ENCODE measurements at regions of chr2 and their contacts with region 1.

Region 1: GRCh38 chr2:95121407-95122196 is at the start of gene MRPS5:
- DNase-seq: peak; percentile 93
- ATAC-seq: peak; percentile 89
- H3K4me3 Mint-ChIP-seq: peak within 1 kb of the TSS; percentile 97
- H3K27ac Mint-ChIP-seq: peak within 1 kb of the TSS; percentile 94
- H3K4me1 Mint-ChIP-seq: peaks cover 37% of the 10 kb centered on the region
- H3K27me3 Mint-ChIP-seq: no peaks in the 10 kb centered on the region
- total RNA-seq, gene MRPS5: 90.7 to 97.1 TPM

Region 2: GRCh38 chr2:95099910-95100309 is 21.7 kb before region 1 on chr2:
- CTCF ChIA-PET with region 1: no interaction called
- POLR2A ChIA-PET with region 1: interaction called, 14 read pairs
- intact Hi-C with region 1: no loop called
- DNase-seq: no peak
- ATAC-seq: no peak
- H3K4me3 Mint-ChIP-seq: no peak overlapping the region
- H3K27ac Mint-ChIP-seq: no peak overlapping the region
- H3K4me1 Mint-ChIP-seq: peaks cover 21% of the 10 kb centered on the region
- H3K27me3 Mint-ChIP-seq: no peaks in the 10 kb centered on the region

Region 3: GRCh38 chr2:95159690-95160449 is 38.3 kb after region 1 on chr2 and contains the start of gene ZNF514:
- CTCF ChIA-PET with region 1: interaction called, 6 read pairs
- POLR2A ChIA-PET with region 1: interaction called, 4 read pairs
- intact Hi-C with region 1: loop called (anchors 1 kb)
- DNase-seq: peak; percentile 85
- ATAC-seq: peak; percentile 95
- H3K4me3 Mint-ChIP-seq: peak within 1 kb of the TSS; percentile 81
- H3K27ac Mint-ChIP-seq: peak within 1 kb of the TSS; percentile 80
- H3K4me1 Mint-ChIP-seq: peaks cover 15% of the 10 kb centered on the region
- H3K27me3 Mint-ChIP-seq: no peaks in the 10 kb centered on the region
- total RNA-seq, gene ZNF514: 7.0 to 8.8 TPM

Region 4: GRCh38 chr2:95165129-95166064 is 43.8 kb after region 1 on chr2 and contains the start of gene ZNF2:
- CTCF ChIA-PET with region 1: interaction called, 3 read pairs
- POLR2A ChIA-PET with region 1: no interaction called
- intact Hi-C with region 1: loop called (anchors 1 kb)
- DNase-seq: peak; percentile 98
- ATAC-seq: peak; percentile 98
- H3K4me3 Mint-ChIP-seq: peak within 1 kb of the TSS; percentile 96
- H3K27ac Mint-ChIP-seq: peak within 1 kb of the TSS; percentile 94
- H3K4me1 Mint-ChIP-seq: peaks cover 24% of the 10 kb centered on the region
- H3K27me3 Mint-ChIP-seq: no peaks in the 10 kb centered on the region
- total RNA-seq, gene ZNF2: 4.3 to 5.1 TPM

Region 5: DNA sequence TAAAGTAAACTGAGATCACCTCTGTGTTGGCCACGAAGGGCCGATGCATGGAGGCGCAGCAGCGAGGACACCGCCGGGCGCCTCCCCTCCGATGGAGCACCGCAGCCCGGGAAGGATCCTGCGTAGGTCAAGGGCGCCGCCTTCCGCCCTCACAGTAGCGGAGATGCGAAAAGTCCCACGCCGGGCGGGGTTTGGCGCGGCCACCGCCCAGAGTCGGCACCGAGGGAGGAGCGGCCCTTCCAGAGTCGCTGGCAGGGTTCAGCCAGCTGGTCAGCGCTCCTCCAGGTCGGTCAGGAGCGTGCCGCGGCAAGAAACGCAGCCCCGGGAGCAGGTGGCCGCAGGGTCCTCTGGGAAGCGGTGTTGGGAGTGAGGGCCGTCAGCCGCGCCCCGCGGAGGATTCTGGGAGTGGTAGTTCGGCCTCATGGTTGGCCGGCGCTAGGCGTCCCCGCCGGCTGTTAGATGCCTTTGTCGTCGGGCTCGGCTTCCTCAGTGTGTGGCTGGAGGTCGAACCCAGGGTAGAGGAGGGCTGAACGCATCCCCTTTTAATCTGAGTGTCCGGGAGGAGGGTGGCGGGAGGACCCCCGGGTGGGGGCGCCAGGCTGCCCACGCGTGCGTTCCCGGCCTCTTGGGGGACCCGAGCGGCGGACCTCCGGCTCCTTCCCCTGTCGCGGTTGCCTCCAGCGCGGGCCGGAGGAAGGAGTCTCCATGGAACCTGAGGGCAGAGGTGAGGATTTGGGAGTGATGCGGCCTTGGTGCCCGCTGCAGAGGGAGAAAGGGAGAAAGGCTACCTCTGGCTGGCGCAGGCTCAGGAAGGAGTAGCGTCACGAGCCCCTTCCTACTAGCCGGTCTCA is 85.7 kb after region 1 on chr2 and contains the start of gene ZNF892:
- CTCF ChIA-PET with region 1: no interaction called
- POLR2A ChIA-PET with region 1: no interaction called
- intact Hi-C with region 1: loop called in 1 of 2 experiments (anchors 1 kb)
- DNase-seq: peak; percentile 91
- ATAC-seq: peak; percentile 98
- H3K4me3 Mint-ChIP-seq: peak within 1 kb of the TSS; percentile 87
- H3K27ac Mint-ChIP-seq: peak within 1 kb of the TSS; percentile 68
- H3K4me1 Mint-ChIP-seq: peaks cover 17% of the 10 kb centered on the region
- H3K27me3 Mint-ChIP-seq: no peaks in the 10 kb centered on the region
- total RNA-seq, gene ZNF892: 3.2 to 3.8 TPM

Region 6: DNA sequence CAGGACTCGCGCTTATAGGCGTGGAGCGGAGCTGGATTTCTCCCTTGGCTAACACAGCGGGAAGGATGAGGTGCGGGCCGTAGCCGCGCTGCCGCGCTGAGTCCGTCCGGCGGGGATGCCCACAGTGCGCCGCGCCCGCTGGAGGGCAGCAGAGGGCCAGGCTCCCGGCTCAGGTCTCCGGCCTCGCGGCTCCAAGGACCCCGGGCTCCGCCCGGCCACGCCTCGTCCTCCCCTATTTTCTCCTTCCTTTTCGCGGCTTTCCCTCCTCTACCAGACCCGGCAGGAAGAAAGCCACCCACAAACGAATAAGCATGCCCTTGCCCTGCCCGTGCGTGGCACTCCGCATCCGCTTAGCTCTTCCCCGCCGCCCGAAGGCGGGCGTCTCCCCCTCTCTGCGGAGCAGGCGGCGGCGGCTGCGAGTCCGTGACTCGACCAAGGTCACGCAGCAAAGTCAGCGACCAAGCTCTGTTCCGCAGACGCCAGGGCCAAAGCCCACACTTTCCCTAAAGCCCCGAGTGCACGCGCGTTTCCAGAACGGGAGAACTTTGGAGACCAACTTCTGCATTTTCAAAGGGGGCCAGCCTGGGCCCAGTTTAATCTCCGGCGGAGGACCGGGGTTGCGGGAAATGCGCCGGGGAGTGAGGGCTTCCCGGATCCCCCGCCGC is 224.1 kb after region 1 on chr2:
- CTCF ChIA-PET with region 1: no interaction called
- POLR2A ChIA-PET with region 1: no interaction called
- intact Hi-C with region 1: loop called in 1 of 2 experiments (anchors 2 kb)
- DNase-seq: peak; percentile 82
- ATAC-seq: peak; percentile 91
- H3K4me3 Mint-ChIP-seq: peak overlapping the region; percentile 66
- H3K27ac Mint-ChIP-seq: no peak overlapping the region
- H3K4me1 Mint-ChIP-seq: no peaks in the 10 kb centered on the region
- H3K27me3 Mint-ChIP-seq: peaks cover 34% of the 10 kb centered on the region

Region 7: DNA sequence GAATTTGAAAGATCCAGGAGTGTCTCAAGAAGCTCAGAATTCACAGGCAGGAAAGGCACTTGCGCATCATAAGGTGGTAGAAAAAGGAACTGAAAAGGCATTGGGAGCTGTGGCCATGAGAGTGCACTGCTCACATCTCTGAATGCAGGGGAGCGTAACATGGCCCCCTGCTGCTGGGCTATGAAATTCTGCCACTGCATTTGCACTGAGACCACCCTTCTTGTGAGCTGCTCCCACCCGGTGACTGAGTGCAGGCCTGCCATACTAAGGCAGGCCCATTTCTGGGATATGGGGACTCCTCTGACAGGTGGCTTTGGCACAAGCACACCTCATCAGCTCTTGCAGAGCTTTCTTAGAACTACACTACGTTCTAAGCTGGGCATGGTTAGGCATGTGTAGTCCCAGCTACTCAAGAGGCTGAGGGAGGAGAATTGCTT is 1112.3 kb after region 1 on chr2:
- CTCF ChIA-PET with region 1: no interaction called
- POLR2A ChIA-PET with region 1: no interaction called
- intact Hi-C with region 1: no loop called
- DNase-seq: no peak
- ATAC-seq: no peak
- H3K4me3 Mint-ChIP-seq: no peak overlapping the region
- H3K27ac Mint-ChIP-seq: no peak overlapping the region
- H3K4me1 Mint-ChIP-seq: no peaks in the 10 kb centered on the region
- H3K27me3 Mint-ChIP-seq: no peaks in the 10 kb centered on the region